H1 (cell line): ENCODE measurements at regions of chr3 and their contacts with region 1.

Region 1: DNA sequence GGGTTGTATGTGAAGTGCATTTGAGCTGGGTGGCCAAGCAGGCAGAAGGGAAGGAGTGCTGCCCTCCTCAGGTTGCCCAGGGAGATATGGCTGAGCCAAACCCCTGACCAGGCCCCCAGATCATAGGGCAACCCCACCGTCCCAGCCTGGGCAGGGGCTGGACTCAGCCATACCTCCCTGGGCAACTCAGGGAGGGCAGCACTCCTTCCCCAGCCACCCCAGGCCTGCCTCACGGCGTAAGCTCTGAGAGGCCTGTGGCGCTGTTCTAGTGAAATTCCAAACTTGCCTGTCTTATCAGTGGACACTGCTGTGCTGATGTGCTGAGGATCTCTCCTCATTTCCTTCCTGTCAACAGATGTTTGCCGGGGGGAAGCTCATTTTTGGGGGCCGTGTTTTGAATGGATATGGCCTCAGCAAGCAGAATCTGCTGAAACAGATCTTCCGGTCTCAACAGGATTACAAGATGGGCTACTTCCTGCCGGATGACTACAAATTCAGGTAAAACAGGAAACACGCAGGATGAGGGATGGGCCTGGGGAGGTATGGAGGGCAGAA is 57.6 kb upstream of the FGD5 start:
- DNase-seq: peak in 1 of 2 experiments; percentile 52
- H3K4me3 ChIP-seq: no peak overlapping the region
- H3K27ac ChIP-seq: no peak overlapping the region
- H3K4me1 ChIP-seq: peaks cover 0 to 3% (median 0%) of the 10 kb centered on the region in 4 experiments; a peak in 1 of 7 replicates
- H3K27me3 ChIP-seq: no peaks in the 10 kb centered on the region; a peak in 1 of 7 replicates
- CTCF ChIP-seq: peak; percentile 33 to 65 (median 47); a peak in 3 of 4 replicates
- EP300 ChIP-seq: no peak
- POLR2A ChIP-seq: no peak
- RAD21 ChIP-seq: peak; percentile 26 to 50; a peak in 3 of 4 replicates

Region 2: GRCh38 chr3:14750650-14751049 is 10.5 kb before region 1 on chr3:
- CTCF ChIA-PET with region 1: interaction called, 10 read pairs
- POLR2A ChIA-PET with region 1: no interaction called
- DNase-seq: no peak
- H3K4me3 ChIP-seq: no peak overlapping the region
- H3K27ac ChIP-seq: no peak overlapping the region
- H3K4me1 ChIP-seq: no peaks in the 10 kb centered on the region
- H3K27me3 ChIP-seq: no peaks in the 10 kb centered on the region
- CTCF ChIP-seq: no peak
- EP300 ChIP-seq: no peak
- POLR2A ChIP-seq: no peak
- RAD21 ChIP-seq: no peak

Region 3: GRCh38 chr3:14774431-14774830 is 13.2 kb after region 1 on chr3:
- CTCF ChIA-PET with region 1: interaction called, 20 read pairs
- POLR2A ChIA-PET with region 1: interaction called, 3 read pairs
- DNase-seq: peak in 1 of 2 experiments; percentile 56
- H3K4me3 ChIP-seq: no peak overlapping the region
- H3K27ac ChIP-seq: no peak overlapping the region; the same call in 1 of the 2 replicates
- H3K4me1 ChIP-seq: peaks cover 3 to 18% (median 14%) of the 10 kb centered on the region in 4 experiments
- H3K27me3 ChIP-seq: no peaks in the 10 kb centered on the region
- CTCF ChIP-seq: peak; percentile 10 to 43 (median 27); a peak in 3 of 4 replicates
- EP300 ChIP-seq: no peak
- POLR2A ChIP-seq: no peak
- RAD21 ChIP-seq: peak; percentile 20 to 33; a peak in 3 of 4 replicates